Posterior vena cava (tissue), 2 donors: ENCODE measurements at regions of chr12 and their contacts with region 1.

Region 1: GRCh38 chr12:20657496-20657895 is 37.6 kb upstream of the SLCO1C1 start:
- DNase-seq: no peak

Region 2: DNA sequence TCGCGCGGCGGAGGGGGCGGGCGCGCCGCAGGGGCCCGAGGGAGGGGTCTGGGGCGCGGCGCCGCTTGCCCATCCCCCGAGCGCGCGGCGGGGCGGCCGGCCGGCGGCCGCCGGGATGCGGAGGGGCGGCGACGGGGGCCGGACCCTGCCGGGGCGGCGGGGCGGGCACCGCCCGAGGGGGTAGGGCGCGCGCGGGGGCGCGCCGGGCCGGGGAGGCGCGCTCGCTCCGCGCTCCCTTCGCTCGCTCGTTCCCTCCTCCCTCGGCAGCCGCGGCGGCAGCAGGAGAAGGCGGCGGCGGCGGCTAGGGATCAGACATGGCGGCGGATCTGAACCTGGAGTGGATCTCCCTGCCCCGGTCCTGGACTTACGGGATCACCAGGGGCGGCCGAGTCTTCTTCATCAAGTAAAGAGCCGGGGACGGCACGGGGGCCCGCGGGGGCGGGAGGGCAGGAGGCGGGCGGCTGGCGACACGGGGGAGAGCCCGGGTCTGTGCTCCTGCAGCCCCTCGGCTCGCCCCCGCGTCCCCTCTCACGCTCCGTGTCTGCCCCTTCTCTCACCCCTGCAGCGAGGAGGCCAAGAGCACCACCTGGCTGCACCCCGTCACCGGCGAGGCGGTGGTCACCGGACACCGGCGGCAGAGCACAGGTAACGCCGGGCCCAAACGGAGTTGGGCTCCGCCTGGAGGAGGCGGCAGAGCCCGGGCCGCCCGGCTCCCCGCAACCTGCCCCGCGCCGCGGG is 1527.8 kb before region 1 on chr12 and contains the start of gene PLEKHA5:
- intact Hi-C with region 1: loop called in 1 of 2 experiments (anchors 10 kb)
- DNase-seq: peak; percentile 88
- total RNA-seq, gene PLEKHA5: 22.5 to 27.4 TPM

Region 3: DNA sequence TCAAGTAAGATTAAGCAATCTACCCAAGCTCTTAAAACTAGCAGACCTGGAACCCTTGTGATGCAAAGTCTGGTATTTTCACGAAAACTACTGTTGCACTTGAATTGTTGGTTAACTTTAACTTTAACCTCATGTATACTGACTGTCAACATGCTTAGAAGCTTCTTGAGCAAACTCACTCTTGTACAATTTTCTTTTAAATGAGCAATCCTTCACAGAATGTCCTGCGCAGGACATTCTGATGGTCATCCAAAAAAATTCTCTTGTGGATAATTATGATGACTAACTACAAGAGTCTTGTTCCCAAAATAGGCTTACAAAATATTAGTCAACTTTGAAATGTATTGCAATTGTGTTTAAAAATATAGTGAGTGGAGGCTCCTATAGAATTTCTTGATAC is 343.2 kb before region 1 on chr12:
- intact Hi-C with region 1: no loop called
- DNase-seq: no peak